ENCODE measurements at regions of chr18 and their contacts with region 1.

Region 1: GRCh38 chr18:58529714-58530354 is 99.1 kb downstream of the ALPK2 start:
- DNase-seq: peak; percentile 76
- H3K4me3 Mint-ChIP-seq: no peak overlapping the region
- H3K27ac Mint-ChIP-seq: peak overlapping the region; percentile 43
- H3K4me1 Mint-ChIP-seq: peaks cover 19% of the 10 kb centered on the region
- H3K27me3 Mint-ChIP-seq: peaks cover 6% of the 10 kb centered on the region

Region 2: DNA sequence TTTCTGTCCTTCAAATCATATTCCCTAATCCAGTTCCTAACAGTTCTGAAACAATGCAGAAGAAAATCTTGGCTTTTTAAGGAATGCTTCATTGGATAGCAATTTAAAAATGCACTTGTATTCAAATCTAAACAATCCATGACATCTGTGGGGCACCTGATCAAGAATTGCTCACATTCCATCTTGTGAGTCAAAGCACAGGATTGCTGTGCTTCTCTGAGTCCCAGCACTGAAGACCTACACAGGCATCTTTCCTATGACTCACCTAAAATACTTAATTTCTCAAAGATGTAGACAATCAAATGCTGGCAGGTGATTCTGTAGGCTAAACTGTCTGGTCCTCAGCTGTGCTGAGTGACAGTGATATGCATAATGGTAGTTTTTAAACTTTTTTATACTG is 716.6 kb before region 1 on chr18:
- CTCF ChIA-PET with region 1: no interaction called
- POLR2A ChIA-PET with region 1: no interaction called
- intact Hi-C with region 1: no loop called
- DNase-seq: no peak
- H3K4me3 Mint-ChIP-seq: no peak overlapping the region
- H3K27ac Mint-ChIP-seq: no peak overlapping the region
- H3K4me1 Mint-ChIP-seq: no peaks in the 10 kb centered on the region
- H3K27me3 Mint-ChIP-seq: peaks cover 16% of the 10 kb centered on the region

Region 3: GRCh38 chr18:58321986-58322385 is 207.8 kb before region 1 on chr18:
- CTCF ChIA-PET with region 1: no interaction called
- POLR2A ChIA-PET with region 1: no interaction called
- intact Hi-C with region 1: no loop called
- DNase-seq: peak; percentile 71
- H3K4me3 Mint-ChIP-seq: no peak overlapping the region
- H3K27ac Mint-ChIP-seq: no peak overlapping the region
- H3K4me1 Mint-ChIP-seq: peaks cover 15% of the 10 kb centered on the region
- H3K27me3 Mint-ChIP-seq: peaks cover 1% of the 10 kb centered on the region

Region 4: DNA sequence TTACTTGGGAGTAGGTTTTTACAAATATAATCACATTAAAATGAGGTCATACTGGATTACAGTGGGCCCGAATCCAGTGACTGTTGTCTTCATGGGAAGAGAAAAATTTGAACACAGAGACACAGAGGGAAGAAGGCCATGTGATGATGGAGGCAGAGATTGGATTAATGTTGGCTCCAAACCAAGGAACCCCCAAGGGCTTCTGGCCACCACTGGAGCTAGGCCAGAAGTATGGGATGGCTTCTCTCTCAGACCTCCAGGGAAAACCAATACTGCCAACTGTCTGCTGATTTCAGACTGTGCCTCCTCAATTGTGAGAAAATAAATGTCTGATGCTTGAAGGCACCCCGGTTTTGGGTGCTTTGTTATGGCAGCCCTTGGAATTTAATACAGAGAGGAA is 23.1 kb after region 1 on chr18:
- CTCF ChIA-PET with region 1: no interaction called
- POLR2A ChIA-PET with region 1: no interaction called
- intact Hi-C with region 1: no loop called
- DNase-seq: no peak
- H3K4me3 Mint-ChIP-seq: no peak overlapping the region
- H3K27ac Mint-ChIP-seq: peak overlapping the region; percentile 14
- H3K4me1 Mint-ChIP-seq: peaks cover 37% of the 10 kb centered on the region
- H3K27me3 Mint-ChIP-seq: no peaks in the 10 kb centered on the region

Region 5: GRCh38 chr18:58562999-58563667 is 33.3 kb after region 1 on chr18:
- CTCF ChIA-PET with region 1: interaction called, 17 read pairs
- POLR2A ChIA-PET with region 1: no interaction called
- intact Hi-C with region 1: no loop called
- DNase-seq: no peak
- H3K4me3 Mint-ChIP-seq: no peak overlapping the region
- H3K27ac Mint-ChIP-seq: no peak overlapping the region
- H3K4me1 Mint-ChIP-seq: peaks cover 25% of the 10 kb centered on the region
- H3K27me3 Mint-ChIP-seq: no peaks in the 10 kb centered on the region

Region 6: DNA sequence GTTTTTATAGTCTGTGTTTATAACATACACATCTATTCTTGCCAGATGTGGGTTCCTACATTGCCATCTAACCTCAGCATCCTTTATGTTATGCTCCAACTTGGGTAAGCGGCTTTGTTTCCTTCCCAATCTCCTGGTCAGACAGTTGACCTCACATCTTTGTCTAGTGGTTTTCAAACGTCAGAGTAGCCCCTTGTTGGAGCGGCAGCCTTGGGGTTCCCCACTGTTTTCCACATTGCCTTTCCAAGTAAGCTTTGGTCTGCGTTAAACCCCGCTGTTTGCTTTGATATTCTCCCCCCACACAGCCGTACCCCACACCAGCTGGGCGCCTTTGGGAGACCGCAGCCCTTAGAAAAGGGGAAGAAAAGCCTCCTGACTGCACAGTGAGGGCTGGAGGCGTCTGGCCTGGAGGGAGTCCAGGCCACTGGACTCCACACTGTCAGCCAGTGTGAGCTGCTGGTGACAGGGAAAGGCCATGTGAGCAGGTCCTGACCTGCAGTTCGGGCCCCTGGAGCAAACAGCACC is 224.8 kb after region 1 on chr18:
- CTCF ChIA-PET with region 1: interaction called, 10 read pairs
- POLR2A ChIA-PET with region 1: no interaction called
- intact Hi-C with region 1: no loop called
- DNase-seq: no peak
- H3K4me3 Mint-ChIP-seq: no peak overlapping the region
- H3K27ac Mint-ChIP-seq: no peak overlapping the region
- H3K4me1 Mint-ChIP-seq: peaks cover 14% of the 10 kb centered on the region
- H3K27me3 Mint-ChIP-seq: no peaks in the 10 kb centered on the region